ENCODE measurements at regions of chr20 and their contacts with region 1.

Region 1: DNA sequence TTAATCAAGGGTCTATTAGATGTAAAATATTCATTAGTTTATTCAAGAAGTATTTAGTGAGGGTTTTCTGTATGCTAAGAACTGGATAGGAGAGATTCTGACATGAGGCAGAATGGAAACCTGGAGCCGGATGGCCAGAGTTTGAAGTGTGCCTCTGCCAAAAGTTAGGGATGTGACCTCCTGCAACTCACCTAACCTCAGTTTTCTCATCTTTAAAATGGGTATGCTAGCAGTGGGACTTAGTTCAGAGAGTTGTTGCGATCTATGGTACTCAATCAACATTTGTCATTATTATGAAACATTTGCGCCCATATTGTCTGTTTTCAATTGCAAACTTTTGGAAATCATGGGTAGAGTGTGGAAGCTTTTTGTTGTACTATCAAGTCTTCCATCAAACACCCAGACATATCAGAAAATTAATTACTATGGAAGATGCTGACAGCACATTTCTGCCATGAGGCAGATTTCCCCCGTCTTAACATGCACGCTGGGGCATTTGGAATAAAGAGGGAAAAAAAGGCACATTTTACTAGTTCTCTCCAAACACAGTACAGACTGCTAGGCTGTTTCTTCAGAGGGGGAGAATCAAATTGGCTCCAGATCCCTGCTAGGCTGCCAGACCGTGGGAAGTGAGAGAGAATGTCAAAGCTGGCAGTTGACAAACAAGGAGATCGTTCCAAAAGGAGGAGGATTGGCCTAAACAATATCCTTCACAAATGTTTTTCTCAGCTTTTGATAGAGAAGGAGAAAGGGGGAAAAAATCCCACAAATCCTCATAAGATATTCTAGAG is 205.3 kb upstream of the TSHZ2 start:
- DNase-seq: no peak
- ATAC-seq: no peak
- H3K4me3 ChIP-seq: no peak overlapping the region
- H3K27ac ChIP-seq: no peak overlapping the region
- H3K4me1 ChIP-seq: no peaks in the 10 kb centered on the region
- H3K27me3 ChIP-seq: no peaks in the 10 kb centered on the region

Region 2: GRCh38 chr20:52637201-52637600 is 129.6 kb before region 1 on chr20:
- intact Hi-C with region 1: no loop called
- DNase-seq: no peak
- ATAC-seq: no peak
- H3K4me3 ChIP-seq: no peak overlapping the region
- H3K27ac ChIP-seq: no peak overlapping the region
- H3K4me1 ChIP-seq: no peaks in the 10 kb centered on the region
- H3K27me3 ChIP-seq: peaks cover 0 to 1% of the 10 kb centered on the region in 2 donors

Region 3: GRCh38 chr20:52783769-52784168 is 16.9 kb after region 1 on chr20:
- intact Hi-C with region 1: loop called in 1 of 2 experiments (anchors 1 kb)
- DNase-seq: no peak
- ATAC-seq: no peak
- H3K4me3 ChIP-seq: no peak overlapping the region
- H3K27ac ChIP-seq: no peak overlapping the region
- H3K4me1 ChIP-seq: no peaks in the 10 kb centered on the region
- H3K27me3 ChIP-seq: no peaks in the 10 kb centered on the region

Region 4: DNA sequence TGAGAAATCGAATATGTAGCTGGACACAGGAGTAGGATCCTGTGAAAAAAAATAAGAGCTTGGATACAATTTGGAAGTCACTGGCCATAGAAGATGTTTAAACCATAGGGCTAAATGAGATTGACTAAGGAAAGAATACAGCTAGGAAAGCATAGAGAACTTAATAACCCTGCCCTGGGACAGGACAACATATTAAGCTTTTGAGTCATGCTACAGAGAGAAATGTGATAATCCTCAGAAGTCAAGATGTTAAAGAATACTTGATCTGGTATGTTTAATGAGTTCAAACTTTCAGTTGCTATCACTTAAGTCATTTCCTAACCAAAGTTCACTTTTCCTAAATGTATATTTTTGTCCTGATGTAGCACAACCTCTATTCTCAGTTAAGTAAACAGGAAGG is 50.7 kb after region 1 on chr20:
- intact Hi-C with region 1: no loop called
- DNase-seq: no peak
- ATAC-seq: no peak
- H3K4me3 ChIP-seq: no peak overlapping the region
- H3K27ac ChIP-seq: no peak overlapping the region
- H3K4me1 ChIP-seq: no peaks in the 10 kb centered on the region
- H3K27me3 ChIP-seq: peaks cover 0 to 4% of the 10 kb centered on the region in 2 donors

Region 5: GRCh38 chr20:53208110-53208832 is 441.4 kb after region 1 on chr20:
- intact Hi-C with region 1: no loop called
- DNase-seq: no peak
- ATAC-seq: no peak
- H3K4me3 ChIP-seq: no peak overlapping the region
- H3K27ac ChIP-seq: no peak overlapping the region
- H3K4me1 ChIP-seq: no peaks in the 10 kb centered on the region
- H3K27me3 ChIP-seq: no peaks in the 10 kb centered on the region